Activated naive CD4-positive, alpha-beta T cell treated with anti-CD3 and anti-CD28 coated beads for 36 hours (primary cell): ENCODE measurements at regions of chr6 and their contacts with region 1.

Region 1: DNA sequence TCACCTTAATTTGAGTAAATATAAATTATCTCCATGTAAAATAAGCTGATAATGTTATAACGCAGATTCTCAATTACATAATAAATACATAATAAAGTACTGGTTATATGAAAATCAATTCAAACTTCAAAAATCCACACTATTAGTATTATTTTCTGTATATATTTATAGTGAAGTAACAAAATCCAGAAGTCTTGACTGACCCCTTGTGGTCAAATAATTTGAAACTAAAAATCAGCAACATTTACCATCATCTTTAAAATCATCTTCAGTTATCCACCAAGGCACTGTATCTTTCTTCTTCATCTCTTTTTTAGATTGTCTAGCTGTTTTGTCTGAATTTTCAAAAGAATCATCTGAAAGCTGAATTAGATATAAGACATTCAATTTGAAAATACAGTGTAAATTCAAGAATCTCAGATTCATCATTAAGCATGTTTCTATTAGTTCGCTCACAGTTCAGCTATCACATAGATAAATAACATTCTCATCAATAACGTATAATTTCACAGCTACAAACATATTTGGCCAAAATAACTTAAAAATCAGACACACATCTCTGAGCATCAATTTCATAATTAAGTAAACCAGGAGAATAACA is 6.5 kb downstream of the CEP162 start:
- DNase-seq: no peak
- H3K4me3 Mint-ChIP-seq: no peak overlapping the region
- H3K27ac Mint-ChIP-seq: no peak overlapping the region
- H3K4me1 Mint-ChIP-seq: peaks cover 4% of the 10 kb centered on the region
- H3K27me3 Mint-ChIP-seq: no peaks in the 10 kb centered on the region

Region 2: DNA sequence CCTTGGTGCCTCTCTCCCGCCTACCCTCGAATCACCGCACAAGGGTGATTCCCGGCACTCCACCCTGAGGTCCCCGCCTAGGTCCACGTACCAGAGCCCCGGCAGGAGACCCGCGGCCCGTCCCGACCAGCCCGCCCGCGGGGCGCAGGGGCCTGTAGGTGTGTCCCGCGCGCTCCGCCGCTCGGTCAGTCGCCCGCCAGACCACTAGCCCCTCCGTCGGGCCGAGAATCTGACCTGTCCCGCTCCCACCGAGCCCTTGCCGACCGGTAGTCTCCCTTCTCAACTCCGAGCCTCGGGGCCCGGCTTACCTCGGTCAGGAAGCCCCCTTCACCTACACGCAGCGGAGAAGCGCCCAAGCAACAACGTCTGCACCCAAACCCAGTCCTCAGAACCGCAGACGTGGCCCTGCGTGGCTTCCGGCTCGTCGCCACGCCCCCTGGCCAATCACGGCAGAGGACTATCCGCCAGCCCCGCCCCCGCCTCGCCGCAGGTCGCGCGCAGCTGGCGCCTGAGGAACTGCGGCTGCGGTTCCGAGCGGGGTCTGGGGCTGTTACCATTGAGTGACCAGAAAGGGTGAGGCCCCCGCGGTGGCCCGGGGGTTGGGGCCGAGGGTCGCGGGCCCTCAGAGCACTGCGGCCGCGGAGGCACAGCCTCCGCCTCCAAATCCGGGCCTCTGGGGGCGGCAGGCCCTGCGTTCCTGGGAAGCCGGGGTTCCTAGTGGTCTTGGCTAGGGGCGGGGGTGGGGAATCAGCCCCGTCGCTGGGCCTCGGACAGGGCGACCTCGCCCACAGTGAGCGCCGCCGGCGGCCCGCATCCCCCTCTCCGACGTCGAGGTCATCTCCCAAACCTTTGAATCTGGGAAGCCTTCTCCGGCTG is 1027.8 kb before region 1 on chr6 and contains the starts of genes PGM3 and RWDD2A:
- CTCF ChIA-PET with region 1: no interaction called
- intact Hi-C with region 1: no loop called
- DNase-seq: peak; percentile 91
- H3K4me3 Mint-ChIP-seq: peak within 1 kb of the TSS; percentile 96
- H3K27ac Mint-ChIP-seq: peak within 1 kb of the TSS; percentile 89
- H3K4me1 Mint-ChIP-seq: peaks cover 38% of the 10 kb centered on the region
- H3K27me3 Mint-ChIP-seq: peaks cover 2% of the 10 kb centered on the region
- total RNA-seq, gene PGM3: 17.0 to 19.8 TPM
- total RNA-seq, gene RWDD2A: 1.4 TPM

Region 3: GRCh38 chr6:83615025-83615999 is 605.6 kb before region 1 on chr6:
- CTCF ChIA-PET with region 1: interaction called, 5 read pairs
- intact Hi-C with region 1: loop called (anchors 1 kb)
- DNase-seq: no peak
- H3K4me3 Mint-ChIP-seq: no peak overlapping the region
- H3K27ac Mint-ChIP-seq: no peak overlapping the region
- H3K4me1 Mint-ChIP-seq: no peaks in the 10 kb centered on the region
- H3K27me3 Mint-ChIP-seq: peaks cover 3% of the 10 kb centered on the region

Region 4: DNA sequence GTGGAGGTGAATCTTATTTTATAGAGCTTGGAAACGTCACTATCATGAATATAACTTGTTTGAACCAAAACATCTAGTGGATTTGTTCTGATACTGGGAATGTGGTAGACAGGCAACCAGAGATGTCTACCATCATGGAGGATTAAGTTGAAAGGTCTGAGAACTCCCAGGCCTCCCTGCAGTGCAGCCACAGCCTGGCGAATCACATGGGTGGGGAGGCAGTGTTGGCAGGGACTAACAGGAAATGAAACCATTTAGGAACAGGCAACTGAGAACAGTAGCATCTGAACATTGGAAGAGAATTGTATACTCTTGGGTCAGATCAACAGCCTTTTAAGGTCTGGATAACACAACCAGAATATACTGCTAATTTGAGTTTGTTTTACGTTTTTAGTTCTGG is 28.8 kb after region 1 on chr6:
- CTCF ChIA-PET with region 1: no interaction called
- intact Hi-C with region 1: no loop called
- DNase-seq: no peak
- H3K4me3 Mint-ChIP-seq: no peak overlapping the region
- H3K27ac Mint-ChIP-seq: no peak overlapping the region
- H3K4me1 Mint-ChIP-seq: no peaks in the 10 kb centered on the region
- H3K27me3 Mint-ChIP-seq: peaks cover 18% of the 10 kb centered on the region

Region 5: GRCh38 chr6:84284428-84285049 is 63.6 kb after region 1 on chr6:
- CTCF ChIA-PET with region 1: no interaction called
- intact Hi-C with region 1: no loop called
- DNase-seq: no peak
- H3K4me3 Mint-ChIP-seq: no peak overlapping the region
- H3K27ac Mint-ChIP-seq: no peak overlapping the region
- H3K4me1 Mint-ChIP-seq: no peaks in the 10 kb centered on the region
- H3K27me3 Mint-ChIP-seq: peaks cover 22% of the 10 kb centered on the region

Region 6: GRCh38 chr6:85250586-85251220 is 1029.8 kb after region 1 on chr6:
- CTCF ChIA-PET with region 1: no interaction called
- intact Hi-C with region 1: no loop called
- DNase-seq: no peak
- H3K4me3 Mint-ChIP-seq: no peak overlapping the region
- H3K27ac Mint-ChIP-seq: no peak overlapping the region
- H3K4me1 Mint-ChIP-seq: no peaks in the 10 kb centered on the region
- H3K27me3 Mint-ChIP-seq: peaks cover 5% of the 10 kb centered on the region